ENCODE measurements at regions of chr3 and their contacts with region 1.

Region 1: GRCh38 chr3:81503878-81504277 is 257.6 kb downstream of the GBE1 start:
- DNase-seq: no peak
- H3K4me3 ChIP-seq: no peak overlapping the region
- H3K27ac ChIP-seq: no peak overlapping the region
- H3K4me1 ChIP-seq: no peaks in the 10 kb centered on the region
- H3K27me3 ChIP-seq: no peaks in the 10 kb centered on the region
- CTCF ChIP-seq: no peak
- POLR2A ChIP-seq: no peak

Region 2: GRCh38 chr3:81308306-81308705 is 195.6 kb before region 1 on chr3:
- intact Hi-C with region 1: no loop called
- DNase-seq: no peak
- H3K4me3 ChIP-seq: no peak overlapping the region
- H3K27ac ChIP-seq: no peak overlapping the region
- H3K4me1 ChIP-seq: no peaks in the 10 kb centered on the region
- H3K27me3 ChIP-seq: no peaks in the 10 kb centered on the region
- CTCF ChIP-seq: no peak
- POLR2A ChIP-seq: no peak

Region 3: DNA sequence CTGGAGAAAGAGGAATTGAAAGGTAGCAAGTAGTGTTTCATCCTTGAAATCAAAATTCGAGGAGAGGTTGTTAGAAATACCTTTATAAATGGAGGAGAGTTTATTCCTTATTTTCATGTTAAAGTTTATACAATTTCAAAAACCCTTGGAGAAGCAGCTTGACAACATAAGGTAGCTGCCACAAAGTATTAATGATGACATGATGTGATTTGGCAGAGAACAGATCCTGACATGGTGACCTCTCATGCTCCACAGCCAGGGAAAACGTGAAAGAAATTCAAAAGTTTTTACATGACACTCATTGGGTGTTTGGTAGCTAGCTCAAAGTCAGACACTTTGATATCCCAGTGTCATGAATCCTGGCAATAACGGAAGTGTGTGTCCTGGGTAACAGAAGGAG is 63.2 kb before region 1 on chr3:
- intact Hi-C with region 1: loop called (anchors 2 kb)
- DNase-seq: no peak
- H3K4me3 ChIP-seq: no peak overlapping the region
- H3K27ac ChIP-seq: no peak overlapping the region
- H3K4me1 ChIP-seq: no peaks in the 10 kb centered on the region
- H3K27me3 ChIP-seq: no peaks in the 10 kb centered on the region
- CTCF ChIP-seq: no peak
- POLR2A ChIP-seq: no peak

Region 4: GRCh38 chr3:82202269-82202668 is 698.4 kb after region 1 on chr3:
- intact Hi-C with region 1: no loop called
- DNase-seq: no peak
- H3K4me3 ChIP-seq: no peak overlapping the region
- H3K27ac ChIP-seq: no peak overlapping the region
- H3K4me1 ChIP-seq: no peaks in the 10 kb centered on the region
- H3K27me3 ChIP-seq: no peaks in the 10 kb centered on the region
- CTCF ChIP-seq: no peak
- POLR2A ChIP-seq: no peak

Measured in breast epithelium (tissue), 4 donors.